ENCODE measurements at regions of chr2 and their contacts with region 1.

Region 1: GRCh38 chr2:128305159-128306087 is 13.2 kb downstream of the HS6ST1 start:
- DNase-seq: peak; percentile 96
- H3K4me3 ChIP-seq: no peak overlapping the region
- H3K27ac ChIP-seq: peak overlapping the region; percentile 81 to 83
- H3K4me1 ChIP-seq: peaks cover 30% of the 10 kb centered on the region
- H3K27me3 ChIP-seq: no peaks in the 10 kb centered on the region
- CTCF ChIP-seq: peak in 2 of 4 experiments; percentile 21 to 22
- POLR2A ChIP-seq: peak; percentile 25

Region 2: DNA sequence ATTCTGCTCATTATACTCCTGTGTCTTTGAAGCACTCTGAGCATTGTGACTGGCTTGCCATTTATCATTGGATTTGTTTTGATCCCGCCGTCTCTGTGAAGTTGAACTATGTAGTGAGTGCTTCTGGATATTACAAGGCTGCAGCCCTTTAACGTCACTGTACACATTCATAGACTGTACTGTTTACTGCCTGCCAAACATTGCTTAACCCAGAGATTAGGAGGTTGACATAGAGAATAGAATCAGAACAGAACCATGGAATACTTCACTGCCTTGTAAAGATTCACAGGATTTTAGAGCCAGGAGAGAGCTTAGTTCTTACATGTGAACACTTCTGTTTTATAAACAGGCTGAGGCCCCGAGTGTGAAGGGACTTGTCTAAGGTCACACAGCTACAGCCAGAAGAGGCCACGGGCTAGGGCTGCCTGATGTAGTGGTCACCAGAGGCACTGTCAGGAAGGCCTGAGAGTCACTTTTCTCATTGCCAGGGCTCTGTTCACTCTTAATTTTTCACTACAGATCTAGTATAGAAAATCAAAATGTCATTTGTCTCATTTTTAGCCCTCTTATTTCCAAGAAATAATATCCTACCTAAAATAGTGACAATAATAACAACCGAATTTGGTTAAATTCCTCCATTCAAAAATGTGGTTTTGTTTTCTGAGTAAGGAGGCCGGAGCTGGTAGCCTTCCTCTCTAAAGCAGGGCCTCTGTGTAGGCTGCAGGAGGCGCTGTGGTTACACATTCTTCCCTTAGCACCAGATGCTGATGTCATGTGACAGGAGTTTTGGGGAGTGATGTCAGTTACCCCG is 126.6 kb before region 1 on chr2:
- intact Hi-C with region 1: loop called (anchors 10 kb)
- DNase-seq: peak; percentile 47
- H3K4me3 ChIP-seq: no peak overlapping the region
- H3K27ac ChIP-seq: no peak overlapping the region
- H3K4me1 ChIP-seq: no peaks in the 10 kb centered on the region
- H3K27me3 ChIP-seq: no peaks in the 10 kb centered on the region
- CTCF ChIP-seq: peak in 3 of 4 experiments; percentile 44 to 83 (median 65)
- POLR2A ChIP-seq: no peak

Region 3: GRCh38 chr2:128832946-128833663 is 527.7 kb after region 1 on chr2:
- intact Hi-C with region 1: no loop called
- DNase-seq: no peak
- H3K4me3 ChIP-seq: no peak overlapping the region
- H3K27ac ChIP-seq: no peak overlapping the region
- H3K4me1 ChIP-seq: no peaks in the 10 kb centered on the region
- H3K27me3 ChIP-seq: no peaks in the 10 kb centered on the region
- CTCF ChIP-seq: no peak
- POLR2A ChIP-seq: no peak

Region 4: DNA sequence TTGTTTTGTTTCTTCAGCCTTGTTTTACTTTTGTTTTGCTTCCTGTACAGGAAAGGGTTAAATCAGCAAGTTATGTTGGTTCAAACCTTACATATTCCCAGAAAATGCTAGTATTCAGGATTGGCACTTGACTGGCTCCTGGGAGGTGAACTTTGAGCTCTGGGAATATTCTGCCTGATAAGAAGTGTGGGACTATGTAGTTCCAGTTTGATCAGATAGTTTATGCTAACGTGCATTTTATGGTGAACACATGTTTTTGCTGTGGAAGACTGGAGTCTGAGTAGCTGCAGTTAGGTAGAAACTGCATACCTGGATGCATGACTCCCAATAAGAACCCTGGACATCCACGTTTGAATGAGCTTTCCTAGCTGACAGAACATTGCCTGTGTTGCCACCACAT is 616.3 kb after region 1 on chr2:
- intact Hi-C with region 1: no loop called
- DNase-seq: no peak
- H3K4me3 ChIP-seq: no peak overlapping the region
- H3K27ac ChIP-seq: no peak overlapping the region
- H3K4me1 ChIP-seq: no peaks in the 10 kb centered on the region
- H3K27me3 ChIP-seq: no peaks in the 10 kb centered on the region
- CTCF ChIP-seq: no peak
- POLR2A ChIP-seq: no peak